ENCODE measurements at regions of chr1 and their contacts with region 1.

Region 1: GRCh38 chr1:182301467-182302198 is 90.0 kb downstream of the GLUL start:
- DNase-seq: peak in 1 of 35 experiments; percentile 14
- ATAC-seq: peak in 1 of 4 experiments; percentile 56
- H3K4me3 ChIP-seq: no peak overlapping the region
- H3K4me3 Mint-ChIP-seq: no peak overlapping the region
- H3K27ac ChIP-seq: no peak overlapping the region
- H3K27ac Mint-ChIP-seq: no peak overlapping the region
- H3K4me1 ChIP-seq: peaks cover 0 to 5% of the 10 kb centered on the region in 2 experiments
- H3K4me1 Mint-ChIP-seq: peaks cover 19 to 32% (median 24%) of the 10 kb centered on the region in 3 donors
- H3K27me3 ChIP-seq: peaks cover 0 to 2% of the 10 kb centered on the region in 2 experiments
- H3K27me3 Mint-ChIP-seq: peaks cover 0 to 1% of the 10 kb centered on the region in 2 donors

Region 2: DNA sequence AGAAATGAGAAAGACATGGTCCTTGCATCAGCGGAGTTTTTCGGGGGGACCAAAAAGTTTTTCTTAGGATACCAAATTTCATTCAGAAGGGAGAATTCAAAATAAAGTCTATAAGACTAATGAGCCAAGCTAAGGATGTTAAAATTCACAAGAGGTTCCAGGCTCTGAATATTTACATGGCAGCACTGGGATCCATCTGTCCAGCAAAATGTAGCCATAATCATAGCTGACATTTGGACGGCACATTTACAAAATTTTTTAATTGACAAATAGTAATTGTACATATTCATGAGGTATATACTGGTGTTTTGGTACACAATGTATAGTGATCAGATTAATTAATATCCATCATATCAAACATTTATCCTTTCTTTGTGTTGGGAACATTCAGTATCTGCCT is 348.0 kb before region 1 on chr1:
- CTCF ChIA-PET with region 1: no interaction called
- POLR2A ChIA-PET with region 1: no interaction called
- DNase-seq: no peak
- ATAC-seq: no peak
- H3K4me3 ChIP-seq: no peak overlapping the region
- H3K4me3 Mint-ChIP-seq: no peak overlapping the region
- H3K27ac ChIP-seq: no peak overlapping the region
- H3K27ac Mint-ChIP-seq: no peak overlapping the region
- H3K4me1 ChIP-seq: no peaks in the 10 kb centered on the region
- H3K4me1 Mint-ChIP-seq: peaks cover 0 to 1% (median 0%) of the 10 kb centered on the region in 3 donors
- H3K27me3 ChIP-seq: peaks cover 0 to 4% of the 10 kb centered on the region in 2 experiments
- H3K27me3 Mint-ChIP-seq: no peaks in the 10 kb centered on the region

Region 3: GRCh38 chr1:182185813-182186756 is 115.5 kb before region 1 on chr1:
- CTCF ChIA-PET with region 1: no interaction called
- POLR2A ChIA-PET with region 1: no interaction called
- DNase-seq: no peak
- ATAC-seq: no peak
- H3K4me3 ChIP-seq: no peak overlapping the region
- H3K4me3 Mint-ChIP-seq: no peak overlapping the region
- H3K27ac ChIP-seq: no peak overlapping the region
- H3K27ac Mint-ChIP-seq: no peak overlapping the region
- H3K4me1 ChIP-seq: no peaks in the 10 kb centered on the region
- H3K4me1 Mint-ChIP-seq: no peaks in the 10 kb centered on the region
- H3K27me3 ChIP-seq: no peaks in the 10 kb centered on the region
- H3K27me3 Mint-ChIP-seq: peaks cover 4 to 9% of the 10 kb centered on the region in 2 donors

Region 4: GRCh38 chr1:182649041-182649440 is 347.4 kb after region 1 on chr1:
- CTCF ChIA-PET with region 1: interaction called in 1 of 2 experiments, 12 read pairs
- POLR2A ChIA-PET with region 1: no interaction called
- DNase-seq: no peak
- ATAC-seq: no peak
- H3K4me3 ChIP-seq: no peak overlapping the region
- H3K4me3 Mint-ChIP-seq: no peak overlapping the region
- H3K27ac ChIP-seq: no peak overlapping the region
- H3K27ac Mint-ChIP-seq: no peak overlapping the region
- H3K4me1 ChIP-seq: no peaks in the 10 kb centered on the region
- H3K4me1 Mint-ChIP-seq: peaks cover 2 to 7% (median 5%) of the 10 kb centered on the region in 3 donors
- H3K27me3 ChIP-seq: peaks cover 0 to 3% of the 10 kb centered on the region in 2 experiments
- H3K27me3 Mint-ChIP-seq: peaks cover 3 to 7% of the 10 kb centered on the region in 2 donors

Measured in T-cell (primary cell).